ENCODE measurements at regions of chr16 and their contacts with region 1.

Region 1: DNA sequence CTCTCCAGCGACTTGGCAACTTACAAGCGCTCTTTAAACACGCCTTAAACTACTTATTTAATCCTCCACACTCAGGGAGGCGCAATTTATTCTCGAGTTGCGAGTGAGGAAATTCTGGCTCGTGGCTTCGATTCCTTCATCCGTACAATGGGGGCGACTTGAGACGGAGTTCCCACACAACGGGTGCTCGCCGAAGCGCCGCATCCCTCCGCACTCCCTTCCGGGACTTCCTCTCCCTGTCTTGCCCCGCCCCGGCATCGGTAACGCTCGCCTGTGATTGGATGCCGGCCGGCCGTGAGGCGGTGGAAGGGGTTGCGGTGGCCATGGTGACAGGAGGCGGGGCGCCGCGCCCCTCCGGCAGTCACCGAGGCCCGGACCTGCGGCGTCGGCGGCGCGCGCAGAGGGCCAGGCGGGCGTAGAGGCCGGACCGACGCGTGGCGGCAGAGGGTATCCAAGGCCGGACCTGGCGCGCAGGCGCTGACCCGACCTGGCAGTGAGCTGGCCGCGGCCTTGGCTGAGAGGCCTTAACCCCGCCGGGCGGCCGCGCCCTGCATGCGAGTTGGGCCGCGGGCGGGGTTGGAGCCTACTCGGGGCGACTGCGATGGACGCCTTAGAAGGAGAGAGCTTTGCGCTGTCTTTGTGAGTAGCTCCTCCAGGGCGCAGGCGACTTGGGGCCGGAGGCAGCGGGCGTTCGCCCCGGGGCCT is at the start of gene ARL2BP:
- DNase-seq: peak; percentile 98 to 99
- H3K4me3 ChIP-seq: peak within 1 kb of the TSS; percentile 76 to 89 (median 81)
- H3K27ac ChIP-seq: peak within 1 kb of the TSS; percentile 91
- H3K4me1 ChIP-seq: peaks cover 0 to 7% of the 10 kb centered on the region in 2 donors
- H3K27me3 ChIP-seq: no peaks in the 10 kb centered on the region
- CTCF ChIP-seq: no peak
- POLR2A ChIP-seq: peak; percentile 77
- total RNA-seq, gene ARL2BP: 50.5 to 64.0 (median 62.4) TPM

Region 2: DNA sequence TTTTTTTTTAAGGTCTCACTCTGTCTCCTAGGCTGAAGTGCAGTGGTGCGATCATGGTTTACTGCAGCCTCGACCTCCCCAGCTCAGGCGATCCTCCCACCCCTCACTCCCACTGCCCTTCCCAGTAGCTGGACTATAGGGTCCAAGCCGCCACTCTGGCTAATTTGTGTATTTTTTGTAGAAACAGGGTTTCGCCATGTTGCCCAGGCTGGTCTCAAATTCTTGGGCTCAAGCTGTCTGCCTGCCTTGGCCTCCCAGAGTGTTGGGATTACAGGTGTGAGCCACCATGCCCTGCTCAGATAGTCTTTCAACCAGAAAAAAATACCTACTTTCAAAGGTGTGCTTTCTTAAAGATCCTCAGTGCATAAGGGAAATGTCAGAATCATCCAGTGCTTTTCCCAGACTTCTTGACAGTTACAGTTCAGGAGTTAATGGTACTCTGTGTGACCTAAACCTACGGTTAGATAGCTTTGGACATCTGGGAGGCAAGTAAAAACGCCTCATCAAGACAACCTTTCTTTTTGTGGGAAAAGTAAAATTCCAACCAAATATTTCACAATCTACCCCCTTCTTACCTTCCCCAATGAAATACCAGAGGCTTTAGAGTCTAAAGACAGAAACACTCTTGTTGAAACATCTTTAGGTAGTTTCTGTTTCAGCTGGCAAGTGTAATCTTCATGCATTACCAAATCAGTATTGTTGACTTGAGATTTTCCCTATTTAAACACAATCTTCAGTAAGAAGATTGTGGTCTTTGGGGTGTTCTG is 52.0 kb before region 1 on chr16:
- intact Hi-C with region 1: loop called (anchors 2 kb)
- DNase-seq: no peak
- H3K4me3 ChIP-seq: no peak overlapping the region
- H3K27ac ChIP-seq: no peak overlapping the region
- H3K4me1 ChIP-seq: peaks cover 0 to 16% of the 10 kb centered on the region in 2 donors
- H3K27me3 ChIP-seq: no peaks in the 10 kb centered on the region
- CTCF ChIP-seq: no peak
- POLR2A ChIP-seq: no peak

Region 3: GRCh38 chr16:57300387-57301125 is 55.6 kb after region 1 on chr16:
- intact Hi-C with region 1: loop called (anchors 5 kb)
- DNase-seq: peak; percentile 99 to 100
- H3K4me3 ChIP-seq: peak overlapping the region; percentile 40 to 70 (median 56)
- H3K27ac ChIP-seq: peak overlapping the region; percentile 91 to 97
- H3K4me1 ChIP-seq: peaks cover 10 to 17% of the 10 kb centered on the region in 2 donors
- H3K27me3 ChIP-seq: no peaks in the 10 kb centered on the region
- CTCF ChIP-seq: peak; percentile 94 to 99 (median 98)
- POLR2A ChIP-seq: no peak

Measured in breast epithelium (tissue), 4 donors.